ENCODE measurements at regions of chr5 and their contacts with region 1.

Region 1: GRCh38 chr5:77143998-77144836 is 57.1 kb upstream of the ZBED3 start:
- DNase-seq: peak; percentile 65
- H3K4me3 ChIP-seq: no peak overlapping the region
- CTCF ChIP-seq: peak; percentile 95

Region 2: GRCh38 chr5:77210091-77210963 is 66.1 kb after region 1 on chr5 and contains the start of gene PDE8B:
- in situ Hi-C with region 1: no loop called
- DNase-seq: no peak
- H3K4me3 ChIP-seq: peak within 1 kb of the TSS; percentile 34
- CTCF ChIP-seq: no peak

Region 3: DNA sequence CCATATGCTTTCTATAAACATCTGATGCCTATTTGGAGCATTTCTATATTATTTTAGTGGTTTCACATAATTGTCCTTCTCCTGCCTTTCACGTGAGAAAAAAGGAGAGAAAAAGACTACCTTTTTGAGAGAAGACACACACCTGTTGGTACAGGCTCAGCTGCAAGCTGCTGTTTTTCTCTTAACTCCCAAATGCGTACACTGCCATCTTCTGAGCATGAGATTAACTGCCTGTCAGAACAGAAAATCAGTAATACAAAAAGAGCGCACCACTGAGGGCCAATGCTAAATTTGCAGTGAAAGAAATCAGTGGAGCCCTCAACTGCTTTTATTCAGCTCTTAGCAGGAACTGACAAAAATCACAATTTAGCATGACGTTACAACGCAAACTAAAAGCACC is 293.0 kb after region 1 on chr5:
- in situ Hi-C with region 1: loop called (anchors 25 kb)
- DNase-seq: no peak
- H3K4me3 ChIP-seq: no peak overlapping the region
- CTCF ChIP-seq: no peak

Region 4: GRCh38 chr5:77912721-77913120 is 768.5 kb after region 1 on chr5:
- in situ Hi-C with region 1: no loop called
- DNase-seq: no peak
- H3K4me3 ChIP-seq: no peak overlapping the region
- CTCF ChIP-seq: no peak